ENCODE measurements at regions of chr7 and their contacts with region 1.

Region 1: GRCh38 chr7:51242007-51242691 is 74.5 kb downstream of the COBL start:
- DNase-seq: peak; percentile 46 to 53
- H3K4me3 ChIP-seq: no peak overlapping the region
- H3K4me3 Mint-ChIP-seq: no peak overlapping the region
- H3K27ac Mint-ChIP-seq: peak overlapping the region; percentile 3
- H3K4me1 ChIP-seq: peaks cover 36% of the 10 kb centered on the region
- H3K4me1 Mint-ChIP-seq: peaks cover 17% of the 10 kb centered on the region
- H3K27me3 ChIP-seq: no peaks in the 10 kb centered on the region
- H3K27me3 Mint-ChIP-seq: no peaks in the 10 kb centered on the region
- CTCF ChIP-seq: peak in 1 of 2 experiments; percentile 15

Region 2: GRCh38 chr7:51224811-51225612 is 17.1 kb before region 1 on chr7:
- CTCF ChIA-PET with region 1: interaction called, 4 read pairs
- POLR2A ChIA-PET with region 1: no interaction called
- intact Hi-C with region 1: loop called (anchors 1 kb)
- DNase-seq: peak in 1 of 2 experiments; percentile 60
- H3K4me3 ChIP-seq: no peak overlapping the region
- H3K4me3 Mint-ChIP-seq: no peak overlapping the region
- H3K27ac Mint-ChIP-seq: no peak overlapping the region
- H3K4me1 ChIP-seq: peaks cover 16% of the 10 kb centered on the region
- H3K4me1 Mint-ChIP-seq: peaks cover 23% of the 10 kb centered on the region
- H3K27me3 ChIP-seq: no peaks in the 10 kb centered on the region
- H3K27me3 Mint-ChIP-seq: no peaks in the 10 kb centered on the region
- CTCF ChIP-seq: peak in 1 of 2 experiments; percentile 63

Region 3: GRCh38 chr7:51263631-51264484 is 21.7 kb after region 1 on chr7:
- CTCF ChIA-PET with region 1: no interaction called
- POLR2A ChIA-PET with region 1: no interaction called
- intact Hi-C with region 1: loop called (anchors 1 kb)
- DNase-seq: peak; percentile 64 to 72
- H3K4me3 ChIP-seq: no peak overlapping the region
- H3K4me3 Mint-ChIP-seq: no peak overlapping the region
- H3K27ac Mint-ChIP-seq: no peak overlapping the region
- H3K4me1 ChIP-seq: peaks cover 35% of the 10 kb centered on the region
- H3K4me1 Mint-ChIP-seq: peaks cover 29% of the 10 kb centered on the region
- H3K27me3 ChIP-seq: no peaks in the 10 kb centered on the region
- H3K27me3 Mint-ChIP-seq: no peaks in the 10 kb centered on the region
- CTCF ChIP-seq: no peak

Measured in Caco-2 (cell line).